CD14-positive monocyte (primary cell): ENCODE measurements at regions of chr7 and their contacts with region 1.

Region 1: DNA sequence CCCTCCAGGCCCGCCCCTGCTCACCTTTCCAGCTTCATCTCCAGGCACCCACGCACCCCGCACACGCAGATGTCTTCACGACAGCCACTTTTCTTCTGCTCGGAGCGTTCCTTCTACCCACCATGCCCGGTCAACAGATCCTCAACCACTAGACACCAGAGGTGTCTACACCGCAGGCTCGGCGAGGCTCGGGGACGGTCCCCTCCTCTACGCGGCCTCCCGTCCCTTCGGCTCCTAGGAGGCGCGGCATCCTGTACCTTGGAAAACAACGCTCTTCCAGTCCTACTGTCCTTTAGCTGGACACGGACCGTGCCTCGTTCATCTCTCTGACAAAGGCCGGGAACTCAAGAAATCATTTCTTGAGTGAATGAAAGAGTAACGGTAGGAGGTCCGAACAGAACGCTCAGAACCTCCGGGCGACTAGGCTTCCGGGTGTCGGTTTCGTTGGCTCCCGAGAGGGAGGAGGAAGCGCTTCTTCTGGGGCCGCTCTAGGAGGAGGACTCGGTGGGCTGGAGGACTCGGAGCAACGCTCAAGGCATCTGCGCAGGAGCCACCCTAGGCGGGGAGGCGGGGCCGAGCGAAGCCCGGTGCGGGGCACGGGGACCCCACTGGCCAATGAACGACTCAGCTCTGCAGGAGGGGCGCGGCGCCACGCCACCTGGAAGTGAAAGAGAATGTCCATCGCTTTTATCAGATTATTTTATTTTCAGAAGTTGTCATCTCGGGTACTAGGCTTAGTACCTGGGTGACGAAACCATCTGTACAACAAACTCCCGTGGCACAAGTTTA is 7.2 kb upstream of the FIS1 start:
- DNase-seq: peak; percentile 96
- H3K4me3 ChIP-seq: peak overlapping the region; percentile 89 to 99 (median 95)
- H3K4me3 Mint-ChIP-seq: peak overlapping the region; percentile 97 to 98
- H3K27ac ChIP-seq: peak overlapping the region; percentile 82 to 92
- H3K27ac Mint-ChIP-seq: peak overlapping the region; percentile 92 to 99 (median 96)
- H3K4me1 ChIP-seq: peaks cover 20 to 25% of the 10 kb centered on the region in 2 donors
- H3K4me1 Mint-ChIP-seq: peaks cover 26% of the 10 kb centered on the region
- H3K27me3 ChIP-seq: no peaks in the 10 kb centered on the region
- H3K27me3 Mint-ChIP-seq: peaks cover 0 to 10% (median 5%) of the 10 kb centered on the region in 3 donors
- CTCF ChIP-seq: no peak

Region 2: GRCh38 chr7:101085162-101085987 is 166.7 kb before region 1 on chr7 and contains the start of gene TRIM56:
- intact Hi-C with region 1: loop called in 1 of 2 experiments (anchors 10 kb)
- DNase-seq: peak; percentile 76 to 83 (median 77)
- H3K4me3 ChIP-seq: peak within 1 kb of the TSS; percentile 80 to 98 (median 91)
- H3K4me3 Mint-ChIP-seq: peak within 1 kb of the TSS; percentile 92 to 94
- H3K27ac ChIP-seq: peak within 1 kb of the TSS; percentile 82 to 98
- H3K27ac Mint-ChIP-seq: peak within 1 kb of the TSS; percentile 95 to 99 (median 98)
- H3K4me1 ChIP-seq: peaks cover 13 to 21% of the 10 kb centered on the region in 2 donors
- H3K4me1 Mint-ChIP-seq: peaks cover 27% of the 10 kb centered on the region
- H3K27me3 ChIP-seq: no peaks in the 10 kb centered on the region
- H3K27me3 Mint-ChIP-seq: peaks cover 0 to 1% (median 0%) of the 10 kb centered on the region in 3 donors
- CTCF ChIP-seq: no peak
- polyA plus RNA-seq, gene TRIM56: 0.66 to 9.4 (median 1.2) TPM

Region 3: GRCh38 chr7:101862280-101863220 is 610.5 kb after region 1 on chr7:
- intact Hi-C with region 1: no loop called
- DNase-seq: no peak
- H3K4me3 ChIP-seq: no peak overlapping the region
- H3K4me3 Mint-ChIP-seq: no peak overlapping the region
- H3K27ac ChIP-seq: peak overlapping the region in 1 of 2 donors; percentile 14
- H3K27ac Mint-ChIP-seq: peak overlapping the region in 4 of 7 donors; percentile 42 to 71 (median 60)
- H3K4me1 ChIP-seq: peaks cover 27 to 30% of the 10 kb centered on the region in 2 donors
- H3K4me1 Mint-ChIP-seq: peaks cover 38% of the 10 kb centered on the region
- H3K27me3 ChIP-seq: no peaks in the 10 kb centered on the region
- H3K27me3 Mint-ChIP-seq: no peaks in the 10 kb centered on the region
- CTCF ChIP-seq: no peak